HEK293 (cell line): ENCODE measurements at regions of chr9 and their contacts with region 1.

Region 1: DNA sequence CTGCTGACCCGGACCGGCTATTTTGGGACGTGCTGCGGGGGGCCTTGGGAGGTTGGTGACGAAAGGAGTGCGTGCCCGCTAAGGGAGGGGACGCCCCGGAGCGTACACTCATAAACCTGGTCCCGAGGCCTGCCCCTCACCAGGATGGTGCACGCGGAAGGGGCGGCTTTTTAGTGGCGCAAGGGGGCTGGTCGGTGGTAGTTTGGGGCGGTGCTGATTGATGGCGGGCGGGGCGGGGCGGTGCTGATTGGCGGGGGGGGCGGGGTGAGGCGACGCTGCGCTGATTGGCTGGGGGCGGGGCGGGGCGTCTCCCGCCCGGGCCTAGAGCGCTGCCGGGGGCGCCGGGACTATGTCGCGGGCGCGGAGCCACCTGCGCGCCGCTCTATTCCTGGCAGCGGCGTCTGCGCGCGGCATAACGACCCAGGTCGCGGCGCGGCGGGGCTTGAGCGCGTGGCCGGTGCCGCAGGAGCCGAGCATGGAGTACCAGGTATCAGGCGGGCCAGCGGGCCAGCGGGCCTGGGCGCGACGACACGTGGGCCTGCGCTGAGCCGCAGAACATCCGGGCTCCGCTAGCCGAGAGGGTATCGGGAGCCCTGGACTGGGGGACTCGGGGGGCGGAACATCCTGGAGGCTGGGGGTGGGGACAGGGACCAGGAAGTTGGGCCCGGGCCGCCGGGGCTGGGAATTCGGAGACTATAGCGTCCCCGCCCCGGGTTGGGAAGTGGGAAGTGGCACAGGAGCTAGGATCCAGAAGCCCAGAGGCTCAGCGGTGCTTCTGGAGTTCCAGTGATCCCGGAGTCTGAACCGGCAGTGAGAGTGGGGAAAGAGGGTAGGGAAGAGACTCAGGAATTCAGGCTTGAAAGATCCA is at the start of gene FPGS:
- H3K4me3 ChIP-seq: peak within 1 kb of the TSS; percentile 77
- H3K27ac ChIP-seq: peak within 1 kb of the TSS; percentile 79
- H3K4me1 ChIP-seq: peaks cover 6% of the 10 kb centered on the region; the same call in 1 of the 2 replicates
- CTCF ChIP-seq: no peak

Region 2: GRCh38 chr9:127877566-127877998 is 74.8 kb after region 1 on chr9 and contains the start of gene AK1:
- CTCF ChIA-PET with region 1: interaction called, 3 read pairs
- POLR2A ChIA-PET with region 1: interaction called, 15 read pairs
- H3K4me3 ChIP-seq: peak within 1 kb of the TSS; percentile 55
- H3K27ac ChIP-seq: peak within 1 kb of the TSS; percentile 53; the same call in 1 of the 2 replicates
- H3K4me1 ChIP-seq: no peaks in the 10 kb centered on the region; the same call in 1 of the 2 replicates
- CTCF ChIP-seq: no peak